Mammary epithelial cell (primary cell): ENCODE measurements at regions of chr10 and their contacts with region 1.

Region 1: DNA sequence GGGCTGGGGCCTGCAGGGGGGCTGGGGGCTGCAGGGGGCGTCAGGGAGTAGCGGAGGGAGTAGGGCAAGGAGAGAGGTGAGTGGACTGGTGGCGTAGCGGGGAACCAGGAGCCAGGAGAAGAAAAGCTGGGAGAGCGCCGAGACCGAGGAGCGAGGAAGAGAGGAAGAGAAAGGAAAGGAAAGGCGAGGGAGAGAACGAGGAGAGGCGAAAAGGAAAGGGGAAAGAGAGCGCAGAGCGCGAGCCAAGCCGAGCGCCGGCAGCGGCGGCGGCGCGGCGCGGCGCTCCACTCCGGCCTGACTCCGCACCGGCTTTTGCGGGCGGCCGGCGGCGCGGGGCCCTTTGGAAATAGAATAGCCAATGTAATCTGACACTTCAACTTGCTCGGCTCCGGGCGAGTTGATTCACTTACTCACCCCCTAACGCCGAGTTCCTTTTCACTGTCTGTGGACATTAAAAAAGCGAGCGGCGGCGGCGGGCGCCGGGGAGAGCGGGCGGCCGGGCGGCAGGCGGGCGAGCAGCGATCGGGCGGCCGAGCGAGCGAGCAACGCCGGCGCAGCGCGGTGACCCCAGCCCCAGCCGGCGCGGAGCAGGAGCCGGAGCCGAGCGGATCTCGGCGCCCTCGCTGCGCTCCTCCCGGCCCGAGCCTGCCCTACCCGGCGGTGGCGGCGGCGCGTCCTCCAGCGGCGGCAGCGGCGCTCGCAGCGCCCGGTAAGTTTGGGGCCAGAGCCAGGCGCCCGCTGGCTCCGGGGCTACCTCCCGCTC is at the start of gene ZMIZ1:
- DNase-seq: peak; percentile 89
- H3K4me3 ChIP-seq: peak within 1 kb of the TSS; percentile 62 to 84 (median 70)
- H3K27ac ChIP-seq: peak within 1 kb of the TSS; percentile 35
- H3K4me1 ChIP-seq: peaks cover 33% of the 10 kb centered on the region
- H3K27me3 ChIP-seq: no peaks in the 10 kb centered on the region
- CTCF ChIP-seq: peak; percentile 9 to 46
- total RNA-seq, gene ZMIZ1: 22.3 to 25.0 TPM

Region 2: DNA sequence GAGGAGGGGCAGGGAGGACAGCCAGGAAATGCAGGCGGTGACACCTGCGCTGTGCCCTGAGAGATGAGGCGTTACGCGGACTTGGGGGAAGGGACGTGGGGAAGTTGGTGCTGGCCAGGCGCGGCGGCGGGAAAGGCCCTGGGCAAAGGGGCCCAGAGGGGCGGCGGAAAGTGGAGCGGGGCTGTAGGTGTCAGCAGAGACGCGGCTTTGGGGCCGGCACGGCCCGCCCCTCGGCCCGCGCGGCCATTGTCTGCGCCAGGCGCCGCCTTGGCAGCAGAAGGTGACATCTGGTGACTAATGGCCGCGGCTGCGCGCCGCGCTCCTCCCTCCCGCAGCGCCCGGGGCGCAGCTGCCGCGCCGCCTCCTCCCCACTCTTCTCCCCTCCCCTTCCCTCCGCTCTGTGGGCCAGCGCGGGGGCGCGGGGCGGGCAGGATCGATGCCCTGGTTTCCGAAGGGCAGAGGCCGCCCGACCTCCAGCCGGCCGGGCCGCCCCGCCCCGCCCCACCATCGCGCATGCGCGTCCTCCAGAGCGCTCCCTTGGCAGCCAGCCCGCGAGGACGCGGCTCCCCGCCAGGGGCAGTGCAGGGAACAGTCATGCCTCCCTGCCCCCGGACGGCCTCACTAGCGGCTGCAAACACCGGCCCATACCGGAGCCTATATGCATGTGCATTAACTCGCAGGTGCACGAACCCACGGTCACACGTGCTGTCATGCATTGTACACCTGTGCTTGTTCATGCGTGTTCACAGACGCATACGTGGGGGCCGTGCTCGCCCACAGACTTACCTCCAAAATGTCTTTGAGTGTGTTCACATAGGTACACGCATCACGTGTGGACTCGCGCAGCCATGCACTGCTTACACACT is 765.5 kb before region 1 on chr10:
- CTCF ChIA-PET with region 1: no interaction called
- dilution Hi-C with region 1: no loop called
- in situ Hi-C with region 1: no loop called
- intact Hi-C with region 1: loop called (anchors 5 kb)
- DNase-seq: peak; percentile 88
- H3K4me3 ChIP-seq: peak overlapping the region; percentile 53 to 65 (median 64)
- H3K27ac ChIP-seq: no peak overlapping the region
- H3K4me1 ChIP-seq: no peaks in the 10 kb centered on the region
- H3K27me3 ChIP-seq: no peaks in the 10 kb centered on the region
- CTCF ChIP-seq: peak; percentile 53 to 70

Region 3: GRCh38 chr10:78861524-78862327 is 207.0 kb before region 1 on chr10:
- CTCF ChIA-PET with region 1: no interaction called
- dilution Hi-C with region 1: no loop called
- in situ Hi-C with region 1: no loop called
- intact Hi-C with region 1: loop called (anchors 5 kb)
- DNase-seq: no peak
- H3K4me3 ChIP-seq: no peak overlapping the region
- H3K27ac ChIP-seq: no peak overlapping the region
- H3K4me1 ChIP-seq: peaks cover 13% of the 10 kb centered on the region
- H3K27me3 ChIP-seq: no peaks in the 10 kb centered on the region
- CTCF ChIP-seq: no peak

Region 4: GRCh38 chr10:78991187-78991586 is 77.6 kb before region 1 on chr10:
- CTCF ChIA-PET with region 1: interaction called, 16 read pairs
- dilution Hi-C with region 1: no loop called
- in situ Hi-C with region 1: no loop called
- intact Hi-C with region 1: no loop called
- DNase-seq: peak; percentile 79
- H3K4me3 ChIP-seq: no peak overlapping the region
- H3K27ac ChIP-seq: no peak overlapping the region
- H3K4me1 ChIP-seq: peaks cover 7% of the 10 kb centered on the region
- H3K27me3 ChIP-seq: no peaks in the 10 kb centered on the region
- CTCF ChIP-seq: no peak

Region 5: DNA sequence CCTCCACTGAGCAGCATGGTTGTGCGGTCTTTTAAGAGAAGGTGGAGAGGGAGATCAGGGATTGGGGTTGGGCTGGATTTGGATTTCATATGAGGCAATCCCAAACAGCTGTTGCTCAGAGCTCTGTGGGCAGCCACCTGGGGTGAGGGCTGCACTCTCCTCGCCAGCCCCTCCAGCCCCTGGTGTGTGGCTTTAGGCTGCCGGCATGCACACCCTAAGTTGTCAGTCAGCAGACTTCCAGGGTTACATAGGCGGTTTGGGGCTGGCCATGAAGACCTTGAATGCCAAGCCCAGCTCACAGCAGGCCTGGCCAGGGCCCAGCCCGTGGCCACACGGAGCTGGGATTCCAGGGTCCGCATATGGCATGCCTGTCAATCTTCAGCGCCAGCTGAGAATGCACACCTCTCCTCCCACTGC is 54.8 kb after region 1 on chr10:
- CTCF ChIA-PET with region 1: no interaction called
- dilution Hi-C with region 1: no loop called
- in situ Hi-C with region 1: no loop called
- intact Hi-C with region 1: no loop called
- DNase-seq: no peak
- H3K4me3 ChIP-seq: no peak overlapping the region
- H3K27ac ChIP-seq: no peak overlapping the region
- H3K4me1 ChIP-seq: no peaks in the 10 kb centered on the region
- H3K27me3 ChIP-seq: no peaks in the 10 kb centered on the region
- CTCF ChIP-seq: no peak

Region 6: GRCh38 chr10:79149662-79150443 is 81.1 kb after region 1 on chr10:
- CTCF ChIA-PET with region 1: no interaction called
- dilution Hi-C with region 1: no loop called
- in situ Hi-C with region 1: no loop called
- intact Hi-C with region 1: loop called (anchors 2 kb)
- DNase-seq: peak; percentile 81
- H3K4me3 ChIP-seq: peak overlapping the region in 1 of 3 experiments; percentile 26
- H3K27ac ChIP-seq: peak overlapping the region; percentile 80
- H3K4me1 ChIP-seq: peaks cover 60% of the 10 kb centered on the region
- H3K27me3 ChIP-seq: no peaks in the 10 kb centered on the region
- CTCF ChIP-seq: no peak

Region 7: GRCh38 chr10:79347226-79347893 is 278.6 kb after region 1 on chr10 and contains the start of gene PPIF:
- CTCF ChIA-PET with region 1: no interaction called
- dilution Hi-C with region 1: loop called (anchors 10 kb)
- in situ Hi-C with region 1: no loop called
- intact Hi-C with region 1: no loop called
- DNase-seq: peak; percentile 88
- H3K4me3 ChIP-seq: peak within 1 kb of the TSS; percentile 57 to 89 (median 78)
- H3K27ac ChIP-seq: peak within 1 kb of the TSS; percentile 87
- H3K4me1 ChIP-seq: peaks cover 25% of the 10 kb centered on the region
- H3K27me3 ChIP-seq: no peaks in the 10 kb centered on the region
- CTCF ChIP-seq: peak; percentile 77 to 95
- total RNA-seq, gene PPIF: 32.0 to 78.1 TPM